ENCODE measurements at regions of chr2 and their contacts with region 1.

Region 1: GRCh38 chr2:110818767-110819481 is 86.6 kb downstream of the ACOXL start:
- DNase-seq: peak in 1 of 2 experiments; percentile 29
- H3K4me3 ChIP-seq: no peak overlapping the region
- H3K27ac ChIP-seq: no peak overlapping the region
- H3K4me1 ChIP-seq: no peaks in the 10 kb centered on the region
- H3K27me3 ChIP-seq: no peaks in the 10 kb centered on the region
- CTCF ChIP-seq: peak in 2 of 3 experiments; percentile 25 to 29; a peak in 2 of 4 replicates
- EP300 ChIP-seq: no peak
- POLR2A ChIP-seq: no peak
- RAD21 ChIP-seq: peak; percentile 23 to 42; a peak in 3 of 4 replicates

Region 2: DNA sequence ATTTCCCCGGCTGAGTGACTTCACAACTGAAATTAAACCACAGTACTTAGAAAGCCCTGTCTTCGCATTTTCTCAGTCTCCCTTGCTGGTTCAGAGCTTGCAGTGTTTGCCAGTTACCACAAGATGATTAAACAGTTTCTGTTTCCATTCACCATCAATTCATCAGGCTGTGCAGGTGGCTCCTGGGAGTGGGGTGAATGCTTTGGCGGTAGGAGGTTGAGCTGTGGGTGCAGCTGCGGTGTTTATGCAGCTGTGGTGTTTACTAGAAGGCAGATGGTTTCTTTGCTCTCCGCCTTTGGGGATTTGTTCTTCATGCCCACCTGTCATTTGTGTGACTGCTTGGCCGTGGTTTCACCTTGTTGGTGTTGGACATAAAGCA is 70.4 kb before region 1 on chr2:
- CTCF ChIA-PET with region 1: no interaction called
- POLR2A ChIA-PET with region 1: no interaction called
- DNase-seq: no peak
- H3K4me3 ChIP-seq: no peak overlapping the region
- H3K27ac ChIP-seq: no peak overlapping the region
- H3K4me1 ChIP-seq: peaks cover 12 to 28% (median 23%) of the 10 kb centered on the region in 4 experiments
- H3K27me3 ChIP-seq: no peaks in the 10 kb centered on the region
- CTCF ChIP-seq: no peak
- EP300 ChIP-seq: no peak
- POLR2A ChIP-seq: no peak
- RAD21 ChIP-seq: no peak

Region 3: DNA sequence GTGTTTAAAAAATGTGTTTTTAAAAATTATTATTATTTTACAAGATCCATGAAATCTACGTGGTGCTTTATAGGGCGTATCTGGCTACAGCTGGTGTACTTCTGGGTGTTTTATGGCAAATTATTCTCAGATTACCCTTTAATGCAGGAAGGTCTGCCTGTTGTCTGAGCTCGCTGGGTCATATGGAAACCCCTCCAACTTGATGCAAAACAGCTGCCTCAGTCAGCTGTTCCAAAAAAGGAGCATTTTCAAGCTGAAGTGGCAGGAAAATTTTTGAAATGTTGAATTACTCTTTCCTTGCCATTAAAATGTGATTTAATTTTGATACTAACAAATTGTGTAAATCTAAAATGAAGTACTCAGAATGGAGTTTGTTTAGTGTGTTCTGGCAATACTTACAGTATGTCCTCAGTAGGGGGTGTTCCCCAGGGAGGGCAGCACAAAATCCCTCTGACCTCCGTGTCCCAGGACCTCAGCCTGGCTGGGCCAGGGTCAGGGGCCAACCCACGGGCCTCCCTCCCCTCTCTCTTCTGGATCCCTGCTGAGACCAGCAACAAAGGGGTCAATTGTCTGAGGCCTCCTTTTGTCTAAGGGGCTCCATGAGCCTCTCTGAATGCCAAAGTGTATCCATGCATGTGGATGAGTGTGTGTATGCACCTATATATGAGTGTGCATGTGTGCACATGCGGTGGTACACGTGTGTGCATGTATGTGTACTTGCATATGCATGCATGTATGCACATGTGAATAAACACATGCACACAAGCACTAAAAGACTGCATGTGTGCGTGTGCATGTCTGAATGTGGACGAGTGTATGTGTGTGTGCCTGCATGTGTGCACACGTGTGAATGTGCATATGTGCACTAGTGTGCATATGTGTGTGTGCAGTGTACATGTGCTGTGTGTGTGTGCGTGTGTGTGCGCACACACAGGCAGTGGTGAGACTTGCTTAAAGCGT is 18.8 kb after region 1 on chr2:
- CTCF ChIA-PET with region 1: interaction called, 25 read pairs
- POLR2A ChIA-PET with region 1: no interaction called
- DNase-seq: no peak
- H3K4me3 ChIP-seq: no peak overlapping the region
- H3K27ac ChIP-seq: 0 out of 2 replicates have a peak overlapping the region, but pooled peaks have one; percentile 45
- H3K4me1 ChIP-seq: peaks cover 16 to 51% (median 40%) of the 10 kb centered on the region in 4 experiments
- H3K27me3 ChIP-seq: no peaks in the 10 kb centered on the region
- CTCF ChIP-seq: no peak
- EP300 ChIP-seq: no peak
- POLR2A ChIP-seq: no peak
- RAD21 ChIP-seq: no peak

Measured in H1 (cell line).